MCF 10A (cell line): ENCODE measurements at regions of chr12 and their contacts with region 1.

Region 1: DNA sequence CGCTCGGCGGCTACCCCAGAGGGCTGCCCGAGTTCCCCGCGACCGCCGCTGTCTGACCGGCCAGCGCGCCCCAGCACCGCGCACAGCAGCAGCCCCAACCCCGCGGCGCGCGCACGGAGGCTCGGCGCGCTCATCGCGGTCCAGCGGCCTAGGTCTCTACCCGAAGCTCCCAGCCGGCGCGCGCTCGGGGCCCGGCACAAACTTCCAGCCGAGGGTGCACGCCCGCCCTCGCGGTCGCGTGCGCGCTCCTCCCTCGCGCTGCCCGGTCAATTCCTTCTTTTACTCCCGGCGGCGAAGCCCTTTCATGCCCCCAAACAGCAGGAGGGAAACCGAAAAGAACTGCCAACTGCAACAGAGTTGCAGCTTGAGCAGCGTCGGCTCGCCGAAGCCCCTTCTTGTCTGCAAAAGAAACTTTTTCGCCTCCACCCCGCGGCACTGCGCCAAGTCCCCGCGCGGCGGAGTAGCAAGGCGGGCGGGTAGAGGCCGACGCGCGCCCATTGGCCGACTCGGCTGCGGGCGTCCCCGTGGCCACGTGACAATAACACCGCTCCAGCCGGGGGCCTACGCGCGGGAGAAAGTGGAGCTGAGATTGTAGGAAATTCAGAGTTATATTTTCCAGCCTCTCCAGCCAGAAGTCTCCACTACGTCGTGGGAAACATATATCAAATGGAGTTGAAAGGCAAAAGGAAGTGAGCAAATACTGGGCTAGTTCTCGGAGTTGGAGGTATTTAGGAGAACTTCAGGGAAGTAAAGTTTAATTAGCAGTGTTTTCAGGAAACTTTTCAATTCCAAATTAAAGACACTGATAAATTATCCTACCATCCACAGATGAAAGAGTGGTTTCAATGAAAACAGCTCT is at the start of gene LRIG3:
- DNase-seq: peak; percentile 89
- H3K4me3 Mint-ChIP-seq: peak within 1 kb of the TSS; percentile 94
- H3K27ac Mint-ChIP-seq: peak within 1 kb of the TSS; percentile 98
- H3K4me1 Mint-ChIP-seq: peaks cover 30% of the 10 kb centered on the region
- H3K27me3 Mint-ChIP-seq: no peaks in the 10 kb centered on the region
- CTCF ChIP-seq: no peak
- total RNA-seq, gene LRIG3: 26.5 and 41.5 TPM in 2 replicates

Region 2: DNA sequence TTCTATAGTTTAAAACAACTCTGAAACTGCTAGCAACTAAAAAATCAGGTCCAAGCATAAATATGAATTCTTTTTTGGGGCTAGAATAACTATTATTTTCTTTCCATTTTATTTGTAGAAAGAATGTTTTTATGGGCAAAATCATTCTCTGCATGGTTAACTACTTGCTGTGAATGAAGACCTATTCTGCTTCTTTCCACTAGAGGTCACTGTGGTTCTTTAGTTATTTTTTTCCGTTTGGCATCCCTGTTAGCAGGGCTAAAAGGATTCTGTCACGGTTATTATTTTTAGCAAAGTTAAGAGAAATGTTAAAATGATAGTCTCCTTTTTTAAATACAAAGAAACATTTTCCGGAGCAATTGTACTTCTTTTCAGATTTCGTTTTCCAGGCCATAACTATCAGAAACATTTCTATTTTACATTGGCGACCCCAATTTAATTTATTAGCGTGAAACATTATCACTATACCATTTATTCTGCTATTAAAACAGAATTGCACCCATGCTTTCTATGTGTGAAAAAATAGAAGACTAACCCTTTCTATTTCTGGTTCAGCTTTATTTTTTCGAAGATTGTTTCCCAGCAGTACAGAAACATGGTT is 574.2 kb before region 1 on chr12:
- CTCF ChIA-PET with region 1: interaction called, 3 read pairs
- POLR2A ChIA-PET with region 1: interaction called, 5 read pairs
- intact Hi-C with region 1: loop called (anchors 2 kb)
- DNase-seq: peak; percentile 45
- H3K4me3 Mint-ChIP-seq: no peak overlapping the region
- H3K27ac Mint-ChIP-seq: no peak overlapping the region
- H3K4me1 Mint-ChIP-seq: no peaks in the 10 kb centered on the region
- H3K27me3 Mint-ChIP-seq: no peaks in the 10 kb centered on the region
- CTCF ChIP-seq: peak; percentile 55

Region 3: GRCh38 chr12:58877242-58877743 is 43.0 kb before region 1 on chr12:
- CTCF ChIA-PET with region 1: interaction called, 3 read pairs
- POLR2A ChIA-PET with region 1: interaction called, 86 read pairs
- intact Hi-C with region 1: loop called (anchors 1 kb)
- DNase-seq: peak; percentile 94
- H3K4me3 Mint-ChIP-seq: no peak overlapping the region
- H3K27ac Mint-ChIP-seq: peak overlapping the region; percentile 51
- H3K4me1 Mint-ChIP-seq: peaks cover 17% of the 10 kb centered on the region
- H3K27me3 Mint-ChIP-seq: no peaks in the 10 kb centered on the region
- CTCF ChIP-seq: no peak

Region 4: GRCh38 chr12:58907391-58907790 is 12.9 kb before region 1 on chr12:
- CTCF ChIA-PET with region 1: interaction called, 5 read pairs
- POLR2A ChIA-PET with region 1: interaction called, 101 read pairs
- intact Hi-C with region 1: no loop called
- DNase-seq: no peak
- H3K4me3 Mint-ChIP-seq: no peak overlapping the region
- H3K27ac Mint-ChIP-seq: peak overlapping the region; percentile 99
- H3K4me1 Mint-ChIP-seq: peaks cover 39% of the 10 kb centered on the region
- H3K27me3 Mint-ChIP-seq: no peaks in the 10 kb centered on the region
- CTCF ChIP-seq: no peak

Region 5: DNA sequence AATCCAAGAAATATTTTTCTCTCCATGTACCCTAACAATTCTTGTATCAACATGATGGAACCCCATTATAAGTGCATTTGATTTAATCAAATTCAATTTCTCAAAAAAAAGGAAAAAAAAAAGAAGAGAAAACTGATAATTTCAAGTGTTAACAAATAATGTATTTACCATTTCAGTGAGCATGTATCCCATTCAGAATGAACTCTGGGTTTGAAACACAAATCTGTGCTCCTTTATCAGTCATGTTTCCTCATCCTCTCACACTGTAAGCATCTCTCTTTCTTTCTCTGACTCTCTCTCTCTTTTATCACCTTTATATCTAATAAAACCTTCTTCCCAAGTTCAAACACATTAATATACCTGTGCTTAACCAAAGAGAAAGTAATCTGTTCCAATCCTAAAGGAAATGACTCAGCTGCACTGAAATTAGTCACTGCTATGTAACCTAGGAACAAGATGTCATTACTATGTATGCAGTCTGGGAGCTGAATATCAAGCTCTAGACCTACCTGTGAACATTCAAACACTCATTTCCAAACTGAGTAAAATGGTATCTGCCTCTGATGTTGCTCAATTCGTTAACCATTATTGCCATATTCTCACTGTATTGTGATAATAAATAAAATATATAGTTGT is 135.0 kb after region 1 on chr12:
- CTCF ChIA-PET with region 1: no interaction called
- POLR2A ChIA-PET with region 1: interaction called, 655 read pairs
- intact Hi-C with region 1: no loop called
- DNase-seq: peak; percentile 88
- H3K4me3 Mint-ChIP-seq: peak overlapping the region; percentile 9
- H3K27ac Mint-ChIP-seq: peak overlapping the region; percentile 94
- H3K4me1 Mint-ChIP-seq: peaks cover 28% of the 10 kb centered on the region
- H3K27me3 Mint-ChIP-seq: no peaks in the 10 kb centered on the region
- CTCF ChIP-seq: no peak

Region 6: DNA sequence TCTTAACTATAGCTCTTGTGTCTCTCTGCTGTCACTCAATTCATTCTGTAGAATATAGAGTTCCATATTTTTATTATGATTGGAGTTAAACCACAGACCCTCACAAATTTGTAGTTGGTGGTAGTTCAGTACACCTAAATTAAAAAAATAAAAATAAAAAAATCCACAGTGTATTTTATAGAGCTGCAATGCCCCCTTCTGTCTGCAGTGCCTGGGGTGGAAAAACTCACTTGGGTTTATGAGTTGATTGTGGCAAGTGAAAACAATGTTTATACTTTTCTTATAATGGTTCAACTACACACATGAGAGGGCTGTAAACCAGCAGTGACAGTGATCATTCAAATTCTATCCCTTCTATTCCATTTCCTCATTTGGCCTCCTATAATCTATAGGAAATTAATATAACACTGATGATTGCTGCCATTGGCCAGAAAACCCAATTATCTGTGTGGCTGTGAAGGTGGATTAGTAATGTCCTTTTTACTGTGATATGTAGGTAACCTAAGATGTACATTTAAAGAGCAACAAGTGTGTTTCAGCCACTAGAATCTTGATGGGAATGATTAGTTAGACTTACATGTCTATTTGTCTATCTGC is 166.8 kb after region 1 on chr12:
- CTCF ChIA-PET with region 1: interaction called, 4 read pairs
- POLR2A ChIA-PET with region 1: interaction called, 439 read pairs
- intact Hi-C with region 1: no loop called
- DNase-seq: peak; percentile 37
- H3K4me3 Mint-ChIP-seq: no peak overlapping the region
- H3K27ac Mint-ChIP-seq: no peak overlapping the region
- H3K4me1 Mint-ChIP-seq: peaks cover 33% of the 10 kb centered on the region
- H3K27me3 Mint-ChIP-seq: no peaks in the 10 kb centered on the region
- CTCF ChIP-seq: peak; percentile 79